ENCODE measurements at regions of chr7 and their contacts with region 1.

Region 1: DNA sequence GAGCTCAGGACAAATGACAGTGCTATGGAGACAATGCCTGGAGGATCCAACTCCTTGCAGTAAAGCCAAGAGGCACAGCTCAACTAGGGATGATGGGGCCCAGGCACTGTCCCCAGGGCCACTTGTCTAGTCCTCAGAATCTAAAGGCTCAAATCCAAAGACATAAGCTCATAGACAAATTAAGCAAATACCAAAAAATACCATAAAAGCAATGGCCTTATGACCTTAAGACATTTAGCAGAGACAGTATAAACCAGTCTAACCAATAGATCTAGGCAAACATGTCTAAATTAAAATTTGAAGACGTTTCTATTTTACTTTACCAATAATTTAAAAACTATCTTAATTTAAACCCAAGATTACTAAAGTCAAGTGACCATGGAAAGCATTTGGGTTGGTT is 14.8 kb upstream of the MKLN1 start:
- DNase-seq: no peak
- H3K4me3 ChIP-seq: no peak overlapping the region
- H3K27ac ChIP-seq: no peak overlapping the region
- H3K4me1 ChIP-seq: no peaks in the 10 kb centered on the region
- H3K27me3 ChIP-seq: no peaks in the 10 kb centered on the region
- CTCF ChIP-seq: no peak

Region 2: DNA sequence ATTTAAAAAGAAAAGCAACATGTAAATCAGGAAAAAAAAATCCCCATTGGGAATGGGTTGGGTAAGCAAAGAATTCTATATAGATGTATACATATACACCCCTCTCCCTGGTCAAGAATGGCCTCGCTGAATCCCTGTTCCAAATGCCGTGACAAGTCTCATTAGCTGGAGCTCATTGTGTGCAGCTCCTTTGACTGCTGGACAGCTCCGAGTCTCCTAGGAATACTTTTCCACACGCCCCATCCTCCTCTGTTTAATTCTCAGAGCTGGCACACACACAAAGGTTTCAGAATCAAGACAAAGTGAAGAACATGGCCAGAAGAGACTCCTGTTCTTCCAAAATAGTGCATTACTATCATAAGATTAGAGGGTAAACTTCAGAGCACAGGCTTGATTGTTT is 116.0 kb before region 1 on chr7:
- intact Hi-C with region 1: loop called (anchors 10 kb)
- DNase-seq: no peak
- H3K4me3 ChIP-seq: no peak overlapping the region
- H3K27ac ChIP-seq: no peak overlapping the region
- H3K4me1 ChIP-seq: no peaks in the 10 kb centered on the region
- H3K27me3 ChIP-seq: no peaks in the 10 kb centered on the region
- CTCF ChIP-seq: no peak

Measured in left ventricle myocardium inferior (tissue), 1 donor.